Lower lobe of right lung (tissue), 2 donors: ENCODE measurements at regions of chr2 and their contacts with region 1.

Region 1: DNA sequence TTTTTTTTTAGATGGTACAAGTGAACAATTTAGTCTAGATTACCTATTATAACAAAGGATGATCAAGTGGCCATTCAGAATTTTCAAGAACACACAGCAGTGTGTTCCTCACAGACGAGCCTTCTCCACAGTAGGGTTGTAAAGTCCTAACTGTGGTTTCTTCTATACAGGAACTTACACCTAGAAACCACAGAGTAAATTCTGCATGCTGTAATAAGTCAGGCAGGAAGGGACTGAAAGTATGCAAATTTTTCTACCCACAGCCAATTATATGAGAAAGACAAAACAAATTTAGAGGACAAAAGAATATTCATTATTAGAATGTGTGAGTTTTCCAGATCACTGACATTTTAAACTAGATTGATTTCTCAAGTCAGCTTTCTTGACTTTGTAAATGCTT is 99.5 kb downstream of the RBMS1 start:
- DNase-seq: no peak
- ATAC-seq: peak; percentile 48 to 70
- H3K4me3 ChIP-seq: no peak overlapping the region
- H3K27ac ChIP-seq: no peak overlapping the region
- H3K4me1 ChIP-seq: peaks cover 81% of the 10 kb centered on the region
- H3K27me3 ChIP-seq: no peaks in the 10 kb centered on the region
- CTCF ChIP-seq: no peak

Region 2: DNA sequence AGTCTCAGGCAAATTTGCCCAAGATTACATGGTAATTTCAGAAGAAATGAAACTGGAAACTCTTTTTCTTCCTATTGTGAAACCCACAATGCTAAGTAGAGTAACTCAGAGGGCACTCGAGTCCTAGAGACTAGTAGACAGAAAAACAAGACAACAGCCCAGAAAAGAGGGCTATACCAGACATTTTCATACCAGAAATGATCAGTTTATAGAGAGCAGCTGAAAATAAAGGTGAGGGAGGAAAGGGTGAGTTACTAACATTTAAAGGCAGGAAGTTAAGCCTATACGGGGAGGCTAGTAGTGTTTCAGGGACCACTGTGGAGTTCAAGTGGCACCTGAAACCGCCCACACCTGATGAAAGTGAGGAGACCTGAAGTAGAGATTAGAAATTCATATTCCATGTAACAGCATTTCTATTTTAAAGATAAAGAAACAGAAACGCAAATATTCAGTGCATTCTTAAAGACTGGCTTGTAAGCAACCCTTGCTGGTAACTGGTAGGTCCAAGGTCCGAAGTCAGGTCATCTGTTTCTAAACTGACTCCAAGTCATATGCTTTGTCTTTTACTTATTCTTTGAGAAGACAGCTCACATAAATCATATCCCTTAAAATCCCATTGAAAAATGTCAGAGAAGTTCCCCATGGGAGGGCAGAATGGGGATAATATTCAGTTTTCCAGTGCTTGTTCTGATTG is 48.9 kb before region 1 on chr2:
- intact Hi-C with region 1: loop called (anchors 10 kb)
- DNase-seq: no peak
- ATAC-seq: peak in 1 of 2 donors; percentile 65
- H3K4me3 ChIP-seq: no peak overlapping the region
- H3K27ac ChIP-seq: no peak overlapping the region
- H3K4me1 ChIP-seq: peaks cover 44% of the 10 kb centered on the region
- H3K27me3 ChIP-seq: no peaks in the 10 kb centered on the region
- CTCF ChIP-seq: no peak